Activated CD4-positive, alpha-beta memory T cell treated with anti-CD3 and anti-CD28 coated beads, Interleukin-2, amount 10 ng/mL, durations not matched to agents 7 days and 5 days (primary cell): ENCODE measurements at regions of chr11 and their contacts with region 1.

Region 1: DNA sequence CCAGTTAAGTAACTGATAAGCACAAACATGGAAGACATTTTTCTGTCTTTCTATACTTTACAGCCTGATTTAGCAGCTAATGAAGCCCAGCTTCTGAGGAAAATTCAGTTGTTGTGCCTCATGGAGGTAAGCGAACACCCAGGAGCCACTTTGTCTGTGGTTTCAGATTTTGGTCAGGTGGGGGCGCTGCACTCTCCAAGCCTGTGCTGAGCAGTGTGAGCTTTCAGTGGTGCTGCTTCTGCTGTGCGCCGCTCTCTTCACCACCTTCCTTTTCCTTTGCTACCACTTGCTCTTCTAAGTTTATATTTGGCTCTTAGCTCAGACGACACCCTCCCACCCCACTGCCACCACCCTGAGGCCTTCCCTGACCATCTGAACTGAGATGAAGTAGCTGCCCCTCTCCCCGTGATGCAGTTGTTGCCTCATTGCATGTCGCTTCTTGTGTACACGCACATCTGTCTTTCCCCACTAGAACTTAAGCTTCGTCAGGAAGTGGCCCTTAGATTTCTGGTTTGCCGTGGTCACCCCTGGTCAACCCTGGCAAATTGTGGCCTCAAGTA is 14.0 kb downstream of the PSMD13 start:
- DNase-seq: peak; percentile 84
- H3K4me3 Mint-ChIP-seq: no peak overlapping the region
- H3K27ac Mint-ChIP-seq: peak overlapping the region; percentile 59
- H3K4me1 Mint-ChIP-seq: peaks cover 11% of the 10 kb centered on the region
- H3K27me3 Mint-ChIP-seq: no peaks in the 10 kb centered on the region

Region 2: DNA sequence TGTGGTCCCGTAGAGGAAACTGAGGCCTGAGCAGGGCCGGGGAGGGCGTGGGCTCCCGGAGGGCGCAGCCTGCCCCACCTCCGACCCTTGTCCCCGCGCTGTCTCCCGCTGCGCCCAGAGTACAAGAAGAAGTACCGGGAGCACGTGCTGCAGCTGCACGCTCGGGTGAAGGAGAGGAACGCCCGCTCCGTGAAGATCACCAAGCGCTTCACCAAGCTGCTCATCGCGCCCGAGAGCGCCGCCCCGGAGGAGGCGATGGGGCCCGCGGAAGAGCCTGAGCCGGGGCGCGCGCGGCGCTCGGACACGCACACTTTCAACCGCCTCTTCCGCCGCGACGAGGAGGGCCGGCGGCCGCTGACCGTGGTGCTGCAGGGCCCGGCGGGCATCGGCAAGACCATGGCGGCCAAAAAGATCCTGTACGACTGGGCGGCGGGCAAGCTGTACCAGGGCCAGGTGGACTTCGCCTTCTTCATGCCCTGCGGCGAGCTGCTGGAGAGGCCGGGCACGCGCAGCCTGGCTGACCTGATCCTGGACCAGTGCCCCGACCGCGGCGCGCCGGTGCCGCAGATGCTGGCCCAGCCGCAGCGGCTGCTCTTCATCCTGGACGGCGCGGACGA is 29.3 kb after region 1 on chr11:
- CTCF ChIA-PET with region 1: interaction called, 13 read pairs
- POLR2A ChIA-PET with region 1: interaction called, 14 read pairs
- DNase-seq: peak; percentile 54
- H3K4me3 Mint-ChIP-seq: peak overlapping the region; percentile 69
- H3K27ac Mint-ChIP-seq: peak overlapping the region; percentile 66
- H3K4me1 Mint-ChIP-seq: peaks cover 47% of the 10 kb centered on the region
- H3K27me3 Mint-ChIP-seq: peaks cover 68% of the 10 kb centered on the region

Region 3: GRCh38 chr11:304915-305843 is 54.4 kb after region 1 on chr11:
- CTCF ChIA-PET with region 1: interaction called, 16 read pairs
- POLR2A ChIA-PET with region 1: interaction called, 6 read pairs
- DNase-seq: peak; percentile 73
- H3K4me3 Mint-ChIP-seq: no peak overlapping the region
- H3K27ac Mint-ChIP-seq: no peak overlapping the region
- H3K4me1 Mint-ChIP-seq: peaks cover 33% of the 10 kb centered on the region
- H3K27me3 Mint-ChIP-seq: peaks cover 11% of the 10 kb centered on the region

Region 4: DNA sequence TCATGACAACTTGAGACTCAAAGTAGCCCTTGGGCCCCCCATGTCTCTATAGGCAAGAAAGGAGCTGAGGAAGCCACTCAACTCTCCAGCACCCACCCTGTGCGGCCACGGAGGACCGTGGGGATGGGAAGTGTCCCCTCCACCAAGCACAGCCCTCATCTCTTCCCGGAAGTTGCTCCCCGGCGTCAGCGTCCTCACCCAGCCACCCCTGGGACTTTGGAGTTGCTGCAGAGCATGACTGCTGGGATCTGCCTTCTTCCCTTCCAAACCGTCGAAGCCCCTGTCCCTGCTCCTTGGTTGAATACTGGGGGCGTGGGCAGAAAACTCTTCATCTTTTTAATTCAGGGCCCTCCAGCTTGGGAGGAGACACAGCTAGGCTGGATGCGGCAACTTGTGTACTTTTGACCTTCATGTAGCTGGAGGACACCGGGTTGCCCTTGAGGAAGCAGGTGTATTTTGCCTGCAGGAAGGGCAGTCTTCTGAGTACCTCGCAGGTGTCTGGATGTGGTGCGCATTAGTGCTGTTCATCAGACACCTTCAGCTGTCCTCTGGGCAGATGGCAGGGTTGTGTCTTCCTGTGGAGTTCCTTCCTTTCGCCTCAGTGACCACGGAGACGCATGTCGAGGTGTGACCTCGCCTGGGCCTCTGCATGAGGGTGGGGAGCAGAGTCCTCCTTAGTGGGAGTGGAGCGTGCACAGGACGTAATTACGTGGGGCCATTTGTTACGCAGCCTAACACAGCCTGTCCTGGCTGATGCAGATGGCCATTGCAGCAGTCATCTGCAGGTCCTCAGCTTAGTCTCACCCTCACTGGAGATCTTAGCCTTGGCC is 82.0 kb after region 1 on chr11:
- CTCF ChIA-PET with region 1: no interaction called
- POLR2A ChIA-PET with region 1: no interaction called
- DNase-seq: no peak
- H3K4me3 Mint-ChIP-seq: no peak overlapping the region
- H3K27ac Mint-ChIP-seq: no peak overlapping the region
- H3K4me1 Mint-ChIP-seq: peaks cover 50% of the 10 kb centered on the region
- H3K27me3 Mint-ChIP-seq: peaks cover 27% of the 10 kb centered on the region

Region 5: DNA sequence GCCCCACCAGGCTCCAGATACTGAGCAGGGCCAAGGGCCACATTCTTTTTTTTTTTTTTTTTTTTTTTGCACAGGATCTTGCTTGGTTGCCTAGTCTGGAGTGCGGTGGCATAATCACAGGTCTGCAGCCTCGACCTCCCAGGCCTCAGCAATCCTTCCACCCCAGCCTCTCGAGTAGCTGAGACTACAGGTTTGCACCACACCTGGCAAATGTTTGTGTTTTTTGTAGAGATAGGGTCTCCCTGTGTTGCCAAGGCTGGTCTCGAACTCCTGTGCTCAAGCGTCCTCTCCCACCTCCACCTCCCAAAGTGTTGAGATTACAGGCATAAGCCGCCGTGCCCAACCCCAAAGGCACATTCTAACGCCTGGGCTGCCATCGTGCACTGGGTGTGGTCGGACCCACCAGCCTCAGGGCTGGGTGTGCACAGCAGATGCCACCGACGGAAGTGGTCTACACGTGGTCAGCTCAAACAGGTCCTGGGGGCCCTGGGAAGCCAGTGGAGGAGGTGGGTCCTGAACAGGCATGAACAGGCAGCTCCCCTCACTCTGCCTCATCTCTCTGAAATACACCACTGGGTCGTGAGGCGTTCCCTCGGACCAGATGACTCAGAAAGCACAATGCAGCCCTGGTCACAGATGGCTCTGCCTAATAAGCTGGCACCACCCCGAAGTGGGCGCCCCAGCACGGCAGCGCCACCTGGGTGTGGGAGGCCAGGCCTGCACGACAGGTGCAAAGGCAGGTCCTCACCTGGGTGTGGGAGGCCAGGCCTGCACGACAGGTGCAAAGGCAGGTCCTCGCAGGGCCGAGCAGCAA is 113.3 kb after region 1 on chr11:
- CTCF ChIA-PET with region 1: interaction called, 36 read pairs
- POLR2A ChIA-PET with region 1: interaction called, 3 read pairs
- DNase-seq: peak; percentile 62
- H3K4me3 Mint-ChIP-seq: no peak overlapping the region
- H3K27ac Mint-ChIP-seq: no peak overlapping the region
- H3K4me1 Mint-ChIP-seq: peaks cover 9% of the 10 kb centered on the region
- H3K27me3 Mint-ChIP-seq: peaks cover 38% of the 10 kb centered on the region